ENCODE measurements at regions of chr12 and their contacts with region 1.

Region 1: DNA sequence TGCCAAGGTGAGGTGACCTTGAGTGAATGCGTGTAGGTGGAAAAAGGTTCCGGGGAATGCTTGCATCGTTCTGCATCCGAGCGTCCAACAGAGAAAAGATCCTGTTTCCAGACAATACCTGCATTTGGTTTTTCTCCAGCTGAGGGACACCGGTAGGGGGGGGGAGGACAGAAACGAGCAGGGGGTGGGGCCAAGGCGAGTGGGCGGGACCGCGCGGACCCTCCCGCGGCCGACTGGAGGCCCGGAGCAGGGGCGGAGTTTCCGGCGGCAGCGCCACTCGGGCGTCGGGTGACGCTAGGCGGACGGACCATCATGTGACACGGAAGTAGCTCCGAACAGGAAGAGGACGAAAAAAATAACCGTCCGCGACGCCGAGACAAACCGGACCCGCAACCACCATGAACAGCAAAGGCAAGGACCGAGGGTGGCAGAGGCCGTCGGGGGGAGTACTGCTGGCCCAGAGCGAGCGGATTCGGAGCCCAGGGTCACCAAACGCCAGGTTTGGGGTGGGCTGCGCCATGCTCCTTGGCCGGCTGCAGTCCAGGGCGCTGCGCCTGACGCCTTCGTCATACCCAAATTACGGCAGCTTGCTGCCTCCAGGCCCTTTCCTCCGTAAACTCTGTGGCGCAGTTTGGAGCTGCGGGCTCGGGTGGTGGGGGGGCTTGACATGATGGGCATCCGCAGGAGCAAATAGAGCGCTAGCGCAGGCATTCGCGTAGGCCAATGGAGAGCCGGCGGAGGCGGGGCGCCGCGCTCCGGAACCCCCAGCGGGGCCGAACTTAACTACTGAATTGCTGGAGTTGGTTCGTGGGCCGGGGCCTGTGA is at the start of gene DAZAP2:
- DNase-seq: peak; percentile 91 to 97 (median 94)
- ATAC-seq: peak; percentile 89 to 90
- H3K4me3 Mint-ChIP-seq: peak within 1 kb of the TSS; percentile 91 to 99 (median 94)
- H3K27ac Mint-ChIP-seq: peak within 1 kb of the TSS; percentile 97 to 100 (median 99)
- H3K4me1 Mint-ChIP-seq: peaks cover 27 to 49% (median 42%) of the 10 kb centered on the region in 4 donors
- H3K27me3 Mint-ChIP-seq: no peaks in the 10 kb centered on the region
- polyA plus RNA-seq, gene DAZAP2: 1,276 to 1,317 (median 1,313) TPM

Region 2: DNA sequence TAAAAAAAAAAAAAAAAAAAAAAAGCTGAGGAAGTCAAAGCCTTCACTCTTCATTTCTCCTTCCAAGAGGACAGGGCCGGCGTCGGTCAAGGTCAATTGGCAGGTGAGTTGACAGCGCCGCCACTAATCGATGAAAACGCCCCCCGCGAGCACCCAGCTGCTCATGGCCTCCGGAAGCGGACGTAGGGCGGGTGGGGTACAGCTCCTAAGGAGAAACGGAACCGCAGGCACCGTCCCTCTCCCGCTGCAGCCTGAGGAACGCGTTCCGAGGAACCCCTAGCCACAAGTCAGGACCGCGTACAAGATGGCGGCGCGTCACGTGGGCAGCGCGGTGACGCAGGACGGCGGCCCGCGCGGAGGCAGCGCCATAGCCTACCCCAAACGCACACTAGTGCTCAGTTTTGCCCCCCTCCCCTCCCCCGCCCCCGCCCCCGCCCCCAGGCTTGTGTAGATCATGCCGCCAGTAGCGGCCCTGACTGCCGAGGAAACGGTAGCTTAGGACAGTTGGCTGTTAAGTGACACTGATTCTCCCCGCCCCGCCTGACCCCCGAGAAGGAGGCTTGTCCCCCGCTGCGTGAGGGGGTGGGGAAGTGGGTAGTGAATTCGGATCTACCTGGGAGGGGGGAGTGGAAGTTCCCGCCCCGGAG is 475.0 kb before region 1 on chr12 and contains the start of gene ATF1:
- POLR2A ChIA-PET with region 1: interaction called, 10 read pairs
- DNase-seq: peak; percentile 81 to 93 (median 89)
- ATAC-seq: peak; percentile 78 to 80
- H3K4me3 Mint-ChIP-seq: peak within 1 kb of the TSS; percentile 92 to 97 (median 94)
- H3K27ac Mint-ChIP-seq: peak within 1 kb of the TSS; percentile 90 to 99 (median 98)
- H3K4me1 Mint-ChIP-seq: peaks cover 14 to 50% (median 42%) of the 10 kb centered on the region in 4 donors
- H3K27me3 Mint-ChIP-seq: peaks cover 0 to 2% (median 0%) of the 10 kb centered on the region in 5 donors
- polyA plus RNA-seq, gene ATF1: 23.5 to 36.3 (median 34.5) TPM

Region 3: GRCh38 chr12:51083126-51083833 is 155.4 kb before region 1 on chr12 and contains the start of gene CSRNP2:
- POLR2A ChIA-PET with region 1: interaction called, 22 read pairs
- DNase-seq: peak; percentile 92 to 97 (median 94)
- ATAC-seq: peak; percentile 99
- H3K4me3 Mint-ChIP-seq: peak within 1 kb of the TSS; percentile 91 to 99 (median 96)
- H3K27ac Mint-ChIP-seq: peak within 1 kb of the TSS; percentile 89 to 98 (median 95)
- H3K4me1 Mint-ChIP-seq: peaks cover 18 to 41% (median 37%) of the 10 kb centered on the region in 4 donors
- H3K27me3 Mint-ChIP-seq: no peaks in the 10 kb centered on the region
- polyA plus RNA-seq, gene CSRNP2: 2.7 to 3.6 (median 2.7) TPM

Region 4: DNA sequence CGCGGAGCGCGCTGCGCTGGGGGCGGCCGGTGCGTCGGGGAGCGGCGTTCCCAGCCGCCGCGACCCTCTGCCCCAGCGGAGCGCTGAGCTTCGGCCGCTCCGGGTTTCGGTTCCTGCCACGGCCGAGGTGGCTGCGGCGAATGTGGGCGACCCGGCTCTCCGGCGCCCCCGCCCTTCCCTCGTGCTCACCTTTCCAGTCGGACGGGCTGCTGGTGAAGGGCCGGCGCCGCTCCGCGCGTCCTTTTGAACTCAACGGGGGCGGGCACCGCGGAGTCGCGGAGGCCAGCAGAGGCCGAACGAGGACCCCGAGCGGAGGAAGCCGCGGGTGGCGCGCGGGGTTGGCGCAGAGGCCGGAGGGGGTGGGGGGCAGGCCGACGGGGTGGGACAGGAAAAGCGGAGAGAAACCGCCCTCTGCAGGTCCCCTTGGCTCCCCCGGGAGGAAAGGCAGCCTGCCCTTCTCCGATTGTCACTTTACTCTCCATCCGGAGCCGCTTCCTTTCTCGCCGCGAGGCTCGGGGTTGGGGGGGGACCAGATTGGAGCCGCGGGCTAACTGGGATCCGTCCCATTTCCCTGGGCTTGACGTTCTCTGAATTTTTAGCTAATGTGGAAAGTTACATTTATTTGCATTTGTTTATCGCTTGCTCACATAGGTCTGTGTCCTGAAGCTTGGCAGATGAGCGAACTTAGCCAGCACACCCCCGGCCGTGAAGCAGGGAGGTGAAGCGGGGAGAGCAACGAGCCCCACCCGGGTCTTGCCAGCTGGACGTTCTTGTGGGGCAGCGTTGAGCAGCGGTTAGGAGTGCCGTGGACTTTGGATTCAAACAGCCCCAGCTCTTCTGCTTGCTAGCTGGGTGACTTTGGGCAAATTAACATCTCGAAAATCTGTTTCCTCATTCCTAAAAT is 31.6 kb after region 1 on chr12 and contains the start of gene SMAGP:
- POLR2A ChIA-PET with region 1: interaction called, 13 read pairs
- DNase-seq: peak in 9 of 10 donors; percentile 25 to 71 (median 47)
- ATAC-seq: peak; percentile 60 to 62
- H3K4me3 Mint-ChIP-seq: peak within 1 kb of the TSS; percentile 87 to 96 (median 94)
- H3K27ac Mint-ChIP-seq: peak within 1 kb of the TSS; percentile 78 to 95 (median 92)
- H3K4me1 Mint-ChIP-seq: peaks cover 19 to 40% (median 30%) of the 10 kb centered on the region in 4 donors
- H3K27me3 Mint-ChIP-seq: no peaks in the 10 kb centered on the region
- polyA plus RNA-seq, gene SMAGP: 15.1 to 18.5 (median 15.6) TPM

Region 5: GRCh38 chr12:51326762-51327439 is 88.2 kb after region 1 on chr12:
- POLR2A ChIA-PET with region 1: interaction called, 19 read pairs
- DNase-seq: peak in 1 of 10 donors; percentile 14
- ATAC-seq: no peak
- H3K4me3 Mint-ChIP-seq: peak overlapping the region; percentile 4 to 81 (median 64)
- H3K27ac Mint-ChIP-seq: peak overlapping the region; percentile 80 to 97 (median 92)
- H3K4me1 Mint-ChIP-seq: peaks cover 40 to 86% (median 84%) of the 10 kb centered on the region in 4 donors
- H3K27me3 Mint-ChIP-seq: no peaks in the 10 kb centered on the region